CD4-positive, alpha-beta memory T cell (primary cell): ENCODE measurements at regions of chr2 and their contacts with region 1.

Region 1: GRCh38 chr2:43219383-43220228 is 6.8 kb downstream of the ZFP36L2 start:
- DNase-seq: peak; percentile 88 to 92 (median 91)
- H3K4me3 ChIP-seq: peak overlapping the region; percentile 84 to 92
- H3K4me3 Mint-ChIP-seq: peak overlapping the region; percentile 80 to 98 (median 96)
- H3K27ac ChIP-seq: peak overlapping the region; percentile 90
- H3K27ac Mint-ChIP-seq: peak overlapping the region; percentile 93 to 100 (median 98)
- H3K4me1 ChIP-seq: peaks cover 60% of the 10 kb centered on the region
- H3K4me1 Mint-ChIP-seq: peaks cover 31 to 62% (median 40%) of the 10 kb centered on the region in 4 donors
- H3K27me3 ChIP-seq: no peaks in the 10 kb centered on the region
- H3K27me3 Mint-ChIP-seq: peaks cover 0 to 5% of the 10 kb centered on the region in 2 donors

Region 2: GRCh38 chr2:43105586-43106558 is 113.7 kb before region 1 on chr2:
- CTCF ChIA-PET with region 1: no interaction called
- POLR2A ChIA-PET with region 1: no interaction called
- intact Hi-C with region 1: no loop called
- DNase-seq: no peak
- H3K4me3 ChIP-seq: no peak overlapping the region
- H3K4me3 Mint-ChIP-seq: no peak overlapping the region
- H3K27ac ChIP-seq: no peak overlapping the region
- H3K27ac Mint-ChIP-seq: peak overlapping the region in 2 of 7 donors; percentile 6 to 13
- H3K4me1 ChIP-seq: no peaks in the 10 kb centered on the region
- H3K4me1 Mint-ChIP-seq: peaks cover 0 to 1% (median 0%) of the 10 kb centered on the region in 4 donors
- H3K27me3 ChIP-seq: no peaks in the 10 kb centered on the region
- H3K27me3 Mint-ChIP-seq: no peaks in the 10 kb centered on the region

Region 3: GRCh38 chr2:43139996-43140621 is 79.5 kb before region 1 on chr2:
- CTCF ChIA-PET with region 1: interaction called, 258 read pairs
- POLR2A ChIA-PET with region 1: interaction called, 6,960 read pairs
- intact Hi-C with region 1: no loop called
- DNase-seq: peak in 4 of 5 donors; percentile 48 to 65 (median 58)
- H3K4me3 ChIP-seq: no peak overlapping the region
- H3K4me3 Mint-ChIP-seq: peak overlapping the region in 7 of 8 donors; percentile 27 to 86 (median 67)
- H3K27ac ChIP-seq: peak overlapping the region; percentile 83
- H3K27ac Mint-ChIP-seq: peak overlapping the region; percentile 91 to 98 (median 95)
- H3K4me1 ChIP-seq: peaks cover 75% of the 10 kb centered on the region
- H3K4me1 Mint-ChIP-seq: peaks cover 48 to 80% (median 62%) of the 10 kb centered on the region in 4 donors
- H3K27me3 ChIP-seq: no peaks in the 10 kb centered on the region
- H3K27me3 Mint-ChIP-seq: no peaks in the 10 kb centered on the region

Region 4: DNA sequence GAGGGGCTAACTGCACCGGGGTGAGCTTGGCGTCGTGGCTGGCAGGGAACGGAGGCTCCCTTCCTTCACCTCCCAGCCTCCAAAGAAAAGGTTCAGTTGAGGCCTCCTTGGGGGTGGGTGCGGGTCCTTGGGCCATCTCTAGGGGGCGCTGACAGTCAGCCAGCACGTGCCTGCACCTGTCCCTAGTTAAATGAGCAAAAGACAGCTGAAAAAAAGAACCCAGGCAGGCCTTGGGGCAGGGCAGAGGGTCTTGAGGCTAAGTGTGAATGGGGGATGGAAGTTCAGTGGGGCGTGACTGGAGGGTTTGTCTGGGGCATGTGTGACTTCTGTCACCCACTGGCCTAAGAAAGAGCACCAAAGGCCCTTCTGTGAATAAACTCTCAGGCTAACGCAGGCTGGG is 49.6 kb before region 1 on chr2:
- CTCF ChIA-PET with region 1: interaction called, 319 read pairs
- POLR2A ChIA-PET with region 1: interaction called, 6,960 read pairs
- intact Hi-C with region 1: loop called (anchors 1 kb)
- DNase-seq: peak; percentile 66 to 74 (median 69)
- H3K4me3 ChIP-seq: peak overlapping the region in 1 of 2 donors; percentile 42
- H3K4me3 Mint-ChIP-seq: peak overlapping the region; percentile 36 to 89 (median 82)
- H3K27ac ChIP-seq: peak overlapping the region; percentile 65
- H3K27ac Mint-ChIP-seq: peak overlapping the region; percentile 93 to 99 (median 98)
- H3K4me1 ChIP-seq: peaks cover 83% of the 10 kb centered on the region
- H3K4me1 Mint-ChIP-seq: peaks cover 49 to 85% (median 70%) of the 10 kb centered on the region in 4 donors
- H3K27me3 ChIP-seq: no peaks in the 10 kb centered on the region
- H3K27me3 Mint-ChIP-seq: no peaks in the 10 kb centered on the region

Region 5: DNA sequence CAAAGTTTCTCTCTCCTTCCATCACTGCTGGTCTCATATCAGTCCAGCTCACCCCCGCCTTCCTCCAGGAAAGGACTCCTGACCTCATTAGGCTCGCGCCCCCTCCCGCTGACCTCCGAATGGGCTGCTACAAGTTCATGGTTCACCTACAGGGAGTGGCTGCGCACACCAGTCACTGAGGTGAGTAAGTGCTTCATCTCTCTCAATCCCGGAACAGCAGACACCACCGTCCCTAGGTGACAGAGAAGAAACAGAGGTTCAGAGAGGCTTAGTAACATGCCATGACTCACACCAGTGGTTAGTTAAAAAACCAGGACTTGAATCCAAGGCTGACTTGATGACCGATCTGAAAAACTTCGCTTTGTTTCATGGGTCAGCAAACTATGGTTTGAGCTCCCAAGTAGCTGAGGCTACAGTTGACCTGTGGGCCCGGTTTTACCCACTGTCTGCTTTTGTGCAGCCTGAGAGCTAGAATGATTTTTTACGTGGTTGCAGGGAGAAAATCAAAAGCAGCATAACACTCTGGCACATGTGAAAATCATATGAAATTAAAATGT is 35.2 kb before region 1 on chr2:
- CTCF ChIA-PET with region 1: interaction called, 319 read pairs
- POLR2A ChIA-PET with region 1: interaction called, 6,960 read pairs
- intact Hi-C with region 1: no loop called
- DNase-seq: peak in 3 of 5 donors; percentile 49 to 77 (median 56)
- H3K4me3 ChIP-seq: no peak overlapping the region
- H3K4me3 Mint-ChIP-seq: peak overlapping the region in 6 of 8 donors; percentile 5 to 77 (median 56)
- H3K27ac ChIP-seq: peak overlapping the region; percentile 18
- H3K27ac Mint-ChIP-seq: peak overlapping the region; percentile 82 to 99 (median 97)
- H3K4me1 ChIP-seq: peaks cover 65% of the 10 kb centered on the region
- H3K4me1 Mint-ChIP-seq: peaks cover 37 to 71% (median 49%) of the 10 kb centered on the region in 4 donors
- H3K27me3 ChIP-seq: no peaks in the 10 kb centered on the region
- H3K27me3 Mint-ChIP-seq: no peaks in the 10 kb centered on the region

Region 6: GRCh38 chr2:43853141-43854081 is 633.8 kb after region 1 on chr2:
- CTCF ChIA-PET with region 1: no interaction called
- POLR2A ChIA-PET with region 1: no interaction called
- intact Hi-C with region 1: no loop called
- DNase-seq: no peak
- H3K4me3 ChIP-seq: no peak overlapping the region
- H3K4me3 Mint-ChIP-seq: no peak overlapping the region
- H3K27ac ChIP-seq: no peak overlapping the region
- H3K27ac Mint-ChIP-seq: no peak overlapping the region
- H3K4me1 ChIP-seq: no peaks in the 10 kb centered on the region
- H3K4me1 Mint-ChIP-seq: no peaks in the 10 kb centered on the region
- H3K27me3 ChIP-seq: no peaks in the 10 kb centered on the region
- H3K27me3 Mint-ChIP-seq: peaks cover 24 to 27% of the 10 kb centered on the region in 2 donors